ENCODE measurements at regions of chr7 and their contacts with region 1.

Region 1: DNA sequence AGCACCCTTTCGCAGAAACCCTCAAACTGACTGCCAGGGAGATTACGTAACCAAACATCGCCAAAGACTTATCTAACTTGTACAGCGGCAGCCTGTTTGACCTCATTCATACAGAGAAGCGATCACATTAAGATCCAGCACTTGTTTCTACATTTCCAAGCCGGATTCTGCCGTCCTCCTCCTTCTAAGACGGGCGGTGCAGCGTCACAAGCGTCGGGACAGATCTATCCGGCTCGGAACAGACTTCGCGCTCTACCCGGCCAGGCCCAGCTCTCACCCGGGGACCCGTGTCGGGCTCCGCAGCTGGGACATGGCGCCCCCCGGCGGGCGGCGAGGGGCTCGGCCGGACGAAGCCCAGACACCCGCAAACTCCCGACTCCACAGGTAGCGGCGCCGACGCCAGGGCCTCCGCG is 373 bp downstream of the H2AZ2 start:
- DNase-seq: peak; percentile 83
- H3K4me3 ChIP-seq: peak overlapping the region; percentile 55 to 96 (median 94)
- H3K27ac ChIP-seq: peak overlapping the region; percentile 84
- H3K4me1 ChIP-seq: peaks cover 5% of the 10 kb centered on the region
- H3K27me3 ChIP-seq: no peaks in the 10 kb centered on the region
- CTCF ChIP-seq: peak; percentile 47 to 96

Region 2: GRCh38 chr7:44581879-44582603 is 265.5 kb before region 1 on chr7 and contains the start of gene TMED4:
- CTCF ChIA-PET with region 1: no interaction called
- dilution Hi-C with region 1: no loop called
- in situ Hi-C with region 1: loop called (anchors 10 to 25 kb)
- intact Hi-C with region 1: no loop called
- DNase-seq: peak; percentile 97
- H3K4me3 ChIP-seq: peak within 1 kb of the TSS; percentile 62 to 88 (median 72)
- H3K27ac ChIP-seq: peak within 1 kb of the TSS; percentile 76
- H3K4me1 ChIP-seq: peaks cover 12% of the 10 kb centered on the region
- H3K27me3 ChIP-seq: no peaks in the 10 kb centered on the region
- CTCF ChIP-seq: no peak
- total RNA-seq, gene TMED4: 48.2 to 87.9 TPM

Region 3: DNA sequence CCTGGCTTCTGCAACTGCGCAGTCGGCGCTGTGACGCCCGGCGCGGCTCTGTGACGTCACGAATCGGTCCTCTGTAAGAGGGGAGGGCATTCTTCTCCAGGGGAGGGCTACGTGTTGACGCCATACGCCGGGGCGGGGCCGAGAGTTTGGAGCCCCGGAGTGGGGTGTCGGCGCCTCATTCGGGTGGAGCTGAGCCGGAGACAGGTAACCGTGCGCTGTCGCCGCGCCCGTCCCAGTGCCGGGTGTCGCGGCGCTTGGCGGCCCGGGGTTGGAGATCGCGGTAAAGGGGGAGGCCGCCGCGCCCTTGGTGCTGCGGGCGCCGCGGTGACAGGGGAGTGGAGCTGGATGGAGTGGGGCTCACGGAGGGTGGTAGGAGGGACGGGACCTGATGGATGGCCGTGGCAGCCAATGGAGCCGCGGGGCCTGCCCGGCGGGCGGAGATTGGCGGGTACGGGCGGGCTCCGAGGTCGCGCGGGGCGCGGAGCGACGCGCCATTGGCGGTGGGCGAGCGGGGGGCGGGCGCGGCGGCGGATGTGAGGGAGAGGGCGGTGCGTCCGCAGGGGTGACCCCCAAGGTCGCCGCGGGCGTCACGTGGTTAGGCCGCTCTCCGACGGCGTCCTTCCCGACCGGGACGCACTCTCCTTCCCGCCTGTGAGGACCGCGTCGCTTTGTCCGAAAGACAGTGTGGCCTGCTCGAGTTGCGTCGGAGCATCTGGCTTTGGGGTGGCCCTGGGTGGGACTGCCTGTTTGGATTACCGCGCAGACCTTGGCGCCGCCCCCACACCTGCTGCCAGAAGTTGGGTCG is 240.9 kb before region 1 on chr7 and contains the start of gene OGDH:
- CTCF ChIA-PET with region 1: no interaction called
- dilution Hi-C with region 1: no loop called
- in situ Hi-C with region 1: no loop called
- intact Hi-C with region 1: loop called (anchors 5 kb)
- DNase-seq: peak; percentile 97
- H3K4me3 ChIP-seq: peak within 1 kb of the TSS; percentile 71 to 98 (median 82)
- H3K27ac ChIP-seq: peak within 1 kb of the TSS; percentile 72
- H3K4me1 ChIP-seq: peaks cover 9% of the 10 kb centered on the region
- H3K27me3 ChIP-seq: no peaks in the 10 kb centered on the region
- CTCF ChIP-seq: no peak
- total RNA-seq, gene OGDH: 82.4 to 96.9 TPM

Region 4: DNA sequence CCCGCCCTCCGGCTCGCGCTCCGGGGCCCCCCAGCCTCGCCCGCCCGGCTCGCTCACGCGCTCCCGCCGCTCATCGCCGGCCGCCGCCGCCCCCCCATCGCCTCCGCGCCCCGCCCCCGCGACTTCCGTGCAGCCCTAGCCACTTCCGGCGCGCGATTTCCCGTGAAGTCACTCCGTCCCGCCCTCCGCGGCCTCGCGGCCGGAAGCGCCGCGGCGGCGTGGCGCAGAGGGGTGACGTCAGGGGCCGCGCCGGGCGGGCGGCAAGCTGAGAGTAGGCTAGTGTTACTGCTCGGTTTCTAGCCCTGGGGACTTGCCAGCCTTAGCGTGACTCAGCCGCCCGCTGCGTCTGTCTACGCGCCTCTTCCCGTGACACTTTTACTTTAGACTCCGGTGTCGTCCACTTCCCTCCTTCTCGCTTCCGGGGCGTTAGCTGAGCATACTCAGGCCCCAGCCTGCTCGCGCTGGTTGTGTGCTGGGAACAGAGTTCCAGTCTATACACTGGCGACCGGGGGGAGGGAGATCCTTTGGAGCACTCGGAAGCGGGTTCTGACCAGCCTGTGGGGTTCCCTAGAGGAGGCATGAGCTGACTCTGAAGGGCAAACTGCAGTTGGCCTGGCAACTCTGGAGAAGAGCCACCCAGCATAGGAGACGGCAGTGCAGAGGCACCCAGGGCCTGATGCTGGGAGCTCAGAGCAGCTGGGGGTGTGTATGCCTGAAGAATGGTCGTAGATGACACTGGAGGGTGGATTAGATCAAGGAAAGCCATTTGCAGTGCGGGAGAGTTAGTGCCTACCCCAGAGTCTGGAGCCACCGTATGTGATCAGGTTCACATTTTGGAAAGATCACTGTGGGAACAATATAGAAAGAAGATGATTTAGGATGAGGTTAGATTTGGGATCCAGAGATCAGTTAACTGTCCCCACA is 38.1 kb after region 1 on chr7 and contains the start of gene PURB:
- CTCF ChIA-PET with region 1: interaction called, 7 read pairs
- dilution Hi-C with region 1: no loop called
- in situ Hi-C with region 1: no loop called
- intact Hi-C with region 1: loop called (anchors 2 kb)
- DNase-seq: peak; percentile 99
- H3K4me3 ChIP-seq: peak within 1 kb of the TSS; percentile 69 to 94 (median 84)
- H3K27ac ChIP-seq: peak within 1 kb of the TSS; percentile 97
- H3K4me1 ChIP-seq: peaks cover 30% of the 10 kb centered on the region
- H3K27me3 ChIP-seq: no peaks in the 10 kb centered on the region
- CTCF ChIP-seq: no peak
- total RNA-seq, gene PURB: 30.2 to 32.8 TPM